Posterior cingulate gyrus (tissue), 11 donors: ENCODE measurements at regions of chr19 and their contacts with region 1.

Region 1: GRCh38 chr19:58558623-58559274 is 338 bp upstream of the UBE2M start:
- DNase-seq: peak; percentile 95 to 100 (median 98)

Region 2: DNA sequence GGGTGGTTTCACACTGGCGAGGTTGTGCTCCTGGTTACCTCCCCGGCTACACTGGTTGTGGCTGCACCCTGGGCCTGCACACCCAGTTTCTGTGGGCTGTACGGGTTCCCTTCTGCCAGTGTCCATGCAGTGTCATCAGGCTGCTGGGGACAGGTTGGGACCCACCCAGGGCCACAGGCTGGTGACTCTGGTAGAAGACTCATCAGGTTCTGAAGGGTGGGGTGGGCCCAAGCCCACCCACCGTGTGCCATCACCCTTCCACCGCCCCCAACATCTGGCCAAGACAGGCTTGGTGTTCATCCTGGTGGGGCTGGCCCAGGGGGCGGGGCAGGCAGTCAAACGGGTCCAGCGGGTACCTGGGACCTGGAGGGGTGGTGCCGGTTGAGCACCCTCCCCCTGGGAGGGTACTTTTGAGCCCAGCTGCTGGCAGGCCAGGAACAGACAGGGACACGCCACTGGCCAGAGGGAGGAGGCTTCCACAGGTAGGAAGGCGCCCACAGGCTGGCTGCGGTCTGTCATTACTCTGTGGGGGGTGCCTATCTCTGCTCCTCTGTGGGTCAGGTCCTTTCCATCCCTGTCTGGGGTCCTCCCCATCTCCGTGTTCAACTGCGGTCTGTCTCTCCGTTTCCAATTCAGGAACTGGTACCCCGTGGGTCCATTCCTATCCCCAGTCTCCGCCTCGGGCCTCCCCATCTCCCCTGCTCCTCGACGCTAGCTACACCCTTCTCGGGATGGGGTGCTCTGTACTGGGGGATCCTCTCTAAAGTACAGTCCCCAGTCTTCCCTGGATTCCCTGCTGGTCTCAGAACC is 163.3 kb before region 1 on chr19 and contains the start of gene RNF225:
- intact Hi-C with region 1: no loop called
- DNase-seq: peak in 3 of 10 donors; percentile 69 to 70 (median 70)

Region 3: GRCh38 chr19:58543826-58544590 is 14.7 kb before region 1 on chr19 and contains the start of gene TRIM28:
- intact Hi-C with region 1: loop called (anchors 1 kb)
- DNase-seq: peak; percentile 95 to 99 (median 97)

Region 4: DNA sequence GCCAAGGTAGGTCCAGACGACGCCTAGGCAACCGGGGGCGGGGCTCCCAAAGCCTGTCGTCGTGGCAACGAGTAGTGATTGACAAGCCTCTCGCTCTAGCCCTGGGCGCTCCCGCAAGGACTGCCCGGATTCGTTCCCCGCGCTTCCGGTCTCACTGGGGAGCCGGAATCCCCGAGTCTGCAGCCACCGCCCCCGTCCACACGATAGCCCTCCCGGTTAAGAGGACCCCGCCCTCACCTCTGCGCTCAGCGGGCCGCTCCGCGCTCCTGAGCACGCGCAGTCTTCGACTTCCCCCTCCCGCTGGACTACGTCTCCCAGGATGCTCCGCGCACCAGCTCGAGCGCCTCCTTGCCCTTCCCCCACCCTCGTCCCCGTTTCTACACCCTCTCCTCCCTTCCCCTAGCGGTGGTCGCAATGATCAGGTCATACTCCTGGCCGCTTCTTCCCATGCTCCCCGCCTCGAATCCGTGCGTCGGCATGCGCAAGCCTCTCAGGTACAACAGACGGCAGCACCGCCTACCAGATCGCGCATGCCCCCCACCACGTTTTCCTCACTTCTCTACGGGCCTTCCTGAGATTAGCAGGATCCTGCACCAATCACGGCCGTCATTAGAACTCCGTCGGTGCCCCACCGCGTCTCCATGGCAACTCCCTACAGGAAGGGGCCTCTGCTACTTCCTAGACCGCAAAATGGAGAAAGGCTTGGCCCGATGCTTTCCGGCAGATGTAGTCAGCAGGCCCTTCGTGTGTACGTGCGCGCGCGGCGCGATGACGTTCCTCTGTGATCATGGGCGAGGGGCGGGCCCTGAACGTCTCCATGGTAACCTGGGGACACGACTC is 14.3 kb after region 1 on chr19 and contains the start of gene MZF1:
- intact Hi-C with region 1: loop called (anchors 2 kb)
- DNase-seq: peak; percentile 96 to 100 (median 99)